ENCODE measurements at regions of chr2 and their contacts with region 1.

Region 1: DNA sequence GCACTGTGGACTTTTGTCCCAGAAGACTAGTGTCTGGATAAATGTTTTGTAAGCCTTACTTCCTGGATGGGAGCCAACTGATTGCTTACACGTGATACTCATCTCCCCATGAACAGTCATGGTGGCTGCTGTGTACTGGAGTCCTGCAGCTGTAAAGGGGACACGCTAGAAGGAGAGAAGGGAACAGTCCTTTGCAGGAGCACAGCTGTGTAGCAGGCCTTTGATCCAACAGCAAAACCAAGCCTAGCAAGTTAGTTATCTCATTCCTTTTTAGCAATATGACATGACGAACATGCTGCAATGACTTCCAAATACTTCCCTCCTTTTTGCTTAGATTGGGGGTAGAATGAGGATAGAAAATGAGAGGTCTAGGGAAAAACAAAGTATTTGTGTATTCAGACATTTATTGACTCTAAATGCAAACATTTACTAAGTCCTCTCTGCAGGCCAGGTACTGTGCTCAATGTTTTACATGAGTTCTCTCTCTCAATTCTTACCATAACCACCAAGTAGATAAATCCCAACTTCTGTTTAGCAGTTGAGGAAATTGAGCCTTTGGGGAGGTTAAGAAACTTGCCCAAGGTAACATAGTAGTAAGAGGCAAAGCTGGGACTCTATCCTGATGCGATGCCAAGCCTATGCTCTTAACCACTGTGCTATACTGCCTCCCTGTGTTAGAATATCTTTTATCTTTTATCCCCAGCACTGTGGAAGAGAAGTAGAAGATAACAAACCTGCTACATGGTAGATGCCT is 55.4 kb upstream of the CD28 start:
- DNase-seq: peak; percentile 65
- H3K4me3 Mint-ChIP-seq: no peak overlapping the region
- H3K27ac Mint-ChIP-seq: no peak overlapping the region
- H3K4me1 Mint-ChIP-seq: peaks cover 24% of the 10 kb centered on the region
- H3K27me3 Mint-ChIP-seq: no peaks in the 10 kb centered on the region

Region 2: GRCh38 chr2:202510911-202511310 is 1140.1 kb before region 1 on chr2:
- intact Hi-C with region 1: no loop called
- DNase-seq: no peak
- H3K4me3 Mint-ChIP-seq: no peak overlapping the region
- H3K27ac Mint-ChIP-seq: no peak overlapping the region
- H3K4me1 Mint-ChIP-seq: no peaks in the 10 kb centered on the region
- H3K27me3 Mint-ChIP-seq: no peaks in the 10 kb centered on the region

Region 3: DNA sequence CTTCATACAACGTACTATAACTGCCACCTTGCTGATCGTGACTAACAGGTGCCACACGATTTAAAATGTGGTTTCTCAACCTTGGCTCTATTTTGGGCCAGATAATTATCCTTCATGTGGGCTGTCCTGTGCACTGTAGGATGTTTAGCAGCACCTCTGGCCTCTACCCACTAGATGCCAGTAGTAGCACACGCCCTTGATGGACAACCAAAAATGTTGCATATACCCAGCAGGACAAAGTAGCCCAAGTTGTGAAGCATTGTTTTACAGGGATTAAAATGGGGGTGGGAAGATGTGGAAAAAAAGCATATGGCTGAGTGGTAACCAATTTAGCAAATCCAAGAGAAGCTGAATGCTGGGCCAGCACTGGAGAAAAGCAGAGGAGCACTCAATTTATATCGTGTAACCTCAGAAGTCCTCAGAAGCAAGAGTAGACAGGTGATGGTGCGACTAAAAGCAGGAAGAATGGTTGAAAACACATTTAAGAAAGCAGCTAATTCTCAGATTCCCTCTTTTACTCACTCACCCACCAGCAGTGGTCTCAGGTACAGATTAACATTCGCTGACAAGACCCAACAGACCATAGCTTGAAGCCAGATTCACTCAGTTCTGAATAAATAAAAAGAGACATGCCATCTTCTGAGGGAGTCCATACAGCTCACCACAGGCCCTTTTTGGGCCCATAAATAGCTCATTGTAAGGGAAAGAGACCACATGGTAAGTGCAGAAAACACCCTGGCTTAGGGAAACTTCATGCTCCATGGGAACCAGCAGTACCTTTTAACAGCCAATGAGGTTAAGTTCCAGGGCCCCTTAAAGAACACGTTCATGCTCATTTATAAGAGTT is 166.5 kb before region 1 on chr2:
- intact Hi-C with region 1: loop called (anchors 1 kb)
- DNase-seq: peak; percentile 84
- H3K4me3 Mint-ChIP-seq: no peak overlapping the region
- H3K27ac Mint-ChIP-seq: peak overlapping the region; percentile 9
- H3K4me1 Mint-ChIP-seq: peaks cover 7% of the 10 kb centered on the region
- H3K27me3 Mint-ChIP-seq: no peaks in the 10 kb centered on the region

Measured in activated CD4-positive, alpha-beta T cell treated with anti-CD3 and anti-CD28 coated beads, Interleukin-2, amount 10 ng/mL, durations not matched to agents 24 days and 14 days (primary cell).